ENCODE measurements at regions of chr18 and their contacts with region 1.

Region 1: DNA sequence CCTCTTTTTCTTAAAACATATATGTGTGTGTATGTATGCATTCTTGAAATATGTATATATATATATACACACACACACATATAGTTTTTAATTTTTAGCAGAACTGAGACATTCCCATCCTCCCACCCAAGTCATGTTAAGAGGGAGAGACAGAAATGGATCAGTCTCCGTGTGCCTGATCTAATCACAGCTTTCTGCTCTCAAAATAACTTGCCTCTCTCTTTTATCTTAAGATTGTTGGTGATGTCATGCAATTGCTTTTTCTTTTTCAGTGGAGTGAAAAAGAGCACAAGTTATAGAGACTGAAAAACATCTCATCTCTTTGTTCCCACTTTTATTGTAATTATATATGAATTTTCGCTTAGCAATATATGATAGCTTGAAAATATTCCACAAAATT is 279.9 kb upstream of the DOK6 start:
- DNase-seq: no peak
- ATAC-seq: no peak
- H3K4me3 ChIP-seq: no peak overlapping the region
- H3K27ac ChIP-seq: no peak overlapping the region
- H3K4me1 ChIP-seq: no peaks in the 10 kb centered on the region
- H3K27me3 ChIP-seq: no peaks in the 10 kb centered on the region
- CTCF ChIP-seq: no peak

Region 2: GRCh38 chr18:69958422-69958821 is 837.6 kb after region 1 on chr18:
- CTCF ChIA-PET with region 1: no interaction called
- POLR2A ChIA-PET with region 1: interaction called, 14 read pairs
- in situ Hi-C with region 1: no loop called
- intact Hi-C with region 1: no loop called
- DNase-seq: no peak
- ATAC-seq: no peak
- H3K4me3 ChIP-seq: no peak overlapping the region
- H3K27ac ChIP-seq: no peak overlapping the region
- H3K4me1 ChIP-seq: no peaks in the 10 kb centered on the region
- H3K27me3 ChIP-seq: no peaks in the 10 kb centered on the region
- CTCF ChIP-seq: no peak

Measured in Panc1 (cell line).